CD8-positive, alpha-beta T cell (primary cell): ENCODE measurements at regions of chr22 and their contacts with region 1.

Region 1: DNA sequence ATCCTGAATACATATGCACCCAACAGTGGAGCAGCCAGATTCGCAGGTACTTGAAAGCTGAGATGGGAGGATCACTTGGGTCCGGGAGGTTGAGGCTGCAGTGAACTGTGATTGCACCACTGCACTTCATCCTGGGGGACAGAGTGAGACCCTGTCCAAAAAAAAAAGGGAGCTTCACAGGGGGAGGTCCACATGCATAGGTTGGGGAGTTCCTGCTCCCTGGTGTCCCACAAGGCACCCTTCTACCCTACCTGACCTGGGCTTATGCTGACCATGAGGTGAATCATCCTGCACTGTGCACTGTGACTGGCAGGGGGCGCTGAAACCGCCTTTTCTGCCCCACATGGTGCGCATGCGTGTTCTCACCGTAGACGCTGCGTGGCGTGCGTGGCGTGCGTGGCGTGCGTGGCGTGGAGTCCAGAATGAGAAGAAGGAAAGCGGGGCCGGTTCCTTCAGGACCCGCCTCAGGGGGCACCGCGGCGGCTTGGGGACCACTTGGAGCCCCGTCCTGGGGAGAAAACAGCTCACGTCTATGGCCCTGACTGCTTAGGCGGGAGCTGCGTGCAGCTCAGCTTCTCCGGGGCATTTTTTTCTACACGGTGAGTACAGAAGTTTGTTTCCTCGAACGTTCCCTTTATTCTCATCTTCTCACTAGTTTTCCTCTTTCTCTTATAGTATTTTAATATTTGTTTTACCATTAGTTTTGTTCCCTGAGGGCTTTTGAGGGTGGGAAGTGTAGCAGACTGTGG is 116.6 kb upstream of the GRK3 start:
- DNase-seq: peak; percentile 75 to 93 (median 91)
- ATAC-seq: peak; percentile 97
- H3K4me3 ChIP-seq: peak overlapping the region; percentile 68 to 80
- H3K4me3 Mint-ChIP-seq: peak overlapping the region; percentile 93
- H3K27ac ChIP-seq: peak overlapping the region; percentile 70 to 71
- H3K27ac Mint-ChIP-seq: peak overlapping the region; percentile 92
- H3K4me1 ChIP-seq: peaks cover 35% of the 10 kb centered on the region
- H3K4me1 Mint-ChIP-seq: peaks cover 41% of the 10 kb centered on the region
- H3K27me3 ChIP-seq: no peaks in the 10 kb centered on the region
- H3K27me3 Mint-ChIP-seq: no peaks in the 10 kb centered on the region
- CTCF ChIP-seq: peak; percentile 91

Region 2: GRCh38 chr22:25057013-25057881 is 390.6 kb before region 1 on chr22:
- CTCF ChIA-PET with region 1: no interaction called
- POLR2A ChIA-PET with region 1: no interaction called
- intact Hi-C with region 1: loop called in 1 of 2 experiments (anchors 5 kb)
- DNase-seq: peak; percentile 50 to 85 (median 77)
- ATAC-seq: peak; percentile 57
- H3K4me3 ChIP-seq: no peak overlapping the region
- H3K4me3 Mint-ChIP-seq: no peak overlapping the region
- H3K27ac ChIP-seq: no peak overlapping the region
- H3K27ac Mint-ChIP-seq: no peak overlapping the region
- H3K4me1 ChIP-seq: peaks cover 29% of the 10 kb centered on the region
- H3K4me1 Mint-ChIP-seq: peaks cover 36% of the 10 kb centered on the region
- H3K27me3 ChIP-seq: peaks cover 0 to 2% of the 10 kb centered on the region in 2 experiments
- H3K27me3 Mint-ChIP-seq: no peaks in the 10 kb centered on the region
- CTCF ChIP-seq: peak; percentile 76

Region 3: GRCh38 chr22:25404928-25405816 is 42.7 kb before region 1 on chr22:
- CTCF ChIA-PET with region 1: interaction called, 3 read pairs
- POLR2A ChIA-PET with region 1: no interaction called
- intact Hi-C with region 1: loop called (anchors 2 kb)
- DNase-seq: peak; percentile 28 to 81 (median 64)
- ATAC-seq: peak; percentile 91
- H3K4me3 ChIP-seq: peak overlapping the region; percentile 50 to 55
- H3K4me3 Mint-ChIP-seq: peak overlapping the region; percentile 93
- H3K27ac ChIP-seq: peak overlapping the region; percentile 50 to 78
- H3K27ac Mint-ChIP-seq: peak overlapping the region; percentile 69
- H3K4me1 ChIP-seq: peaks cover 30% of the 10 kb centered on the region
- H3K4me1 Mint-ChIP-seq: peaks cover 33% of the 10 kb centered on the region
- H3K27me3 ChIP-seq: no peaks in the 10 kb centered on the region
- H3K27me3 Mint-ChIP-seq: no peaks in the 10 kb centered on the region
- CTCF ChIP-seq: no peak

Region 4: GRCh38 chr22:25777870-25778269 is 330.0 kb after region 1 on chr22:
- CTCF ChIA-PET with region 1: interaction called, 5 read pairs
- POLR2A ChIA-PET with region 1: no interaction called
- intact Hi-C with region 1: loop called (anchors 1 to 5 kb)
- DNase-seq: no peak
- ATAC-seq: no peak
- H3K4me3 ChIP-seq: no peak overlapping the region
- H3K4me3 Mint-ChIP-seq: no peak overlapping the region
- H3K27ac ChIP-seq: no peak overlapping the region
- H3K27ac Mint-ChIP-seq: no peak overlapping the region
- H3K4me1 ChIP-seq: no peaks in the 10 kb centered on the region
- H3K4me1 Mint-ChIP-seq: peaks cover 2% of the 10 kb centered on the region
- H3K27me3 ChIP-seq: no peaks in the 10 kb centered on the region
- H3K27me3 Mint-ChIP-seq: peaks cover 5% of the 10 kb centered on the region
- CTCF ChIP-seq: no peak

Region 5: DNA sequence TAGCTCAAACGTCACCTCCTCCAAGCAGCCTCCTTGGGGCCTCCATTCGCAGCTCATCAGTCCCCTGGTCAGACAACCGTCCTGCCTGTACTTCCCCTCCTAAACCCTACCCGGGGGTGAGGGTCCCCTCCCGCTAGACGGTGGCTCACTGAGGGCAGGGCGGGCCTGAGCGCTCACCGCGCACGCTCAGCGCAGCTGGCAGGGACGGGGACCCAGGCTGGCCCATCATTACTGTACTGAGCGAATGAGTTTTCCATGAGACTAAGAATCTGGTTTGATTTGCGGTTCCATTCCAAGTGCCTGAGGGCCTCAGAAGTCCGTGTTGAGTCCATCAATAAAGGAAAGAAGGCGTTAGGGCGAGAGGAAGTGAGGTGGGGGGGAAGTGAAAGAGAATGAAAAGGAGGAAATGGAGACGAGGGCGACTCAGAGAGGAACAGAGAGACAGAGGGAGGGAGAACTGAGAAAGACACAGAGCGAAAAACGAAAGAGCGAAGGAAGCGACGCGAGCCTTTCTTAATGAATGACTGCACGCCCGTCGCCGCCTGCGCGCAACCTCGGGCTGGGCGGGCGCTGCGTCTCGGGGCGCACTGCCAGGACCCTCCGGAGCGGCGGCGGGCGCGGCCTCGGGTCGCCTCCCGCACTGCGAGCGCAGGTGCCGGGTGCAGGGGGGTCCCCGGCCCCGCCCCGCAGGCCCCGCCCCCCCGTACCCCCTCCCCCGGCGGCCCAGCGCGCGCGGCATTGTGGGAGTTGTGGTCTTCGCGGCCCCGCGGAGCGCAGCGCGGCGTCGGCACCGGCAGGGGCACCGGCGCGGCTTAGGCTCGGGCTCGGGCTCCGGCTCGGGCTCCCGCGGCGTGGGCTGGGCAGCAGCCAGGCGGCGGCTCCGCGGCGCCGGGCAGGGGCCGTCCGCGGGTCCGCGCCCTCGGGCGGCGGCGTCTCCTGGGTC is 980.9 kb after region 1 on chr22 and contains the start of gene ASPHD2:
- CTCF ChIA-PET with region 1: no interaction called
- POLR2A ChIA-PET with region 1: no interaction called
- intact Hi-C with region 1: loop called in 1 of 2 experiments (anchors 5 kb)
- DNase-seq: peak; percentile 62 to 92 (median 80)
- ATAC-seq: peak; percentile 89
- H3K4me3 ChIP-seq: peak within 1 kb of the TSS; percentile 84 to 88
- H3K4me3 Mint-ChIP-seq: peak within 1 kb of the TSS; percentile 100
- H3K27ac ChIP-seq: peak within 1 kb of the TSS; percentile 89 to 96
- H3K27ac Mint-ChIP-seq: peak within 1 kb of the TSS; percentile 99
- H3K4me1 ChIP-seq: peaks cover 23% of the 10 kb centered on the region
- H3K4me1 Mint-ChIP-seq: peaks cover 34% of the 10 kb centered on the region
- H3K27me3 ChIP-seq: no peaks in the 10 kb centered on the region
- H3K27me3 Mint-ChIP-seq: no peaks in the 10 kb centered on the region
- CTCF ChIP-seq: no peak
- total RNA-seq, gene ASPHD2: 0.90 to 1.00 TPM